OCI-LY7 (cell line): ENCODE measurements at regions of chr14 and their contacts with region 1.

Region 1: DNA sequence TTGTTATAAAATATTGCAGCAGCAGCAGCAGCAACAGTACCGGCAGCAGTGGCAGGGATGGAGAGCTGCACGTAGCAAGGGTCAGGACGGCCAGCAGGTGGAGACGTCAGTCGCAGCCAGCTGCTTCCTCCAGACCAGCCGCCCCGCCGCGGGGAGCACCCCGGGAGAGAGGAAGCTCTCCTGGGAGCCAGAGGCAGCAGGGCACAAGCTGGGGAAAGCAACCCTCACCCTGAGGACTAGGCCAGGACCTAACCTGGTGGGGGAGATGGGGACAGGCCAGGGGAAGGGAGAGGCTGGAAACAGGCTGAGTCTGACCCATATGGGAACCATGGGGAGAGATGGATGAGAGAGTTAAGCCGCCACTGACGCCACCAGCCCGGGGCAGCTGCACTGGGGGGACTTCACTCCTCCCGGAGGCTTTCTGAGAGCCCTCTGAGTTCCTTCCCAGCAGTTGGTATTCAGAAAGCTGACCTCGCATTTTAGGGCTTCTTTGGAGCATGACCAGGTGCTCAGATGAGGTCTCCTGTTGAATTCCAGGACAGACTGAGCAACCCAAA is 56.3 kb downstream of the SPTB start:
- DNase-seq: peak; percentile 60
- H3K4me3 ChIP-seq: no peak overlapping the region
- H3K27ac ChIP-seq: no peak overlapping the region
- H3K4me1 ChIP-seq: no peaks in the 10 kb centered on the region
- CTCF ChIP-seq: peak; percentile 77

Region 2: DNA sequence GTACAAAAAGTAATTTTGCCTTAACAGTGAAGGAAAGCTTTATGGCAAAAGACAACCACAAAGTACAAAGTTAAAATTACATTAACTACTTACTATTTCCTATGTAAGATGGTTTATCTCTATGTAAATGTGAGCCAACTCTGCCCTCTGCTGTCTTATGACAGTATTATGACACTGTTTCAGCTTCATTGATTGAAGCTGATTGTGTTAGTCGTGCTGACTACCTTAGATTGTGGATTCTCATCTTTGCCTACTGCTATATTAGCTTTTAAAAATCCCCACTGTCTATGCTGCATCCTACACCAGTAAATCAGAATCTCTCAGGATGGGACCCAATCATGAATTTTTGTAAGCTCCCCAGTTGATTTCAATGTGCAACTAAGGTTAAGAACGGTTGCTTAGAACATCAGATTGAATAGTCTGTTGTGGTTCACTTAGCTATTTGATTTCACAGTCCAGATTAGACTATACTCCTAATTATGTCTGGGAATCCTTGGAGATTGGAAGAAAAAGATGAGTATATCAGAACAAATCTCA is 68.5 kb after region 1 on chr14:
- CTCF ChIA-PET with region 1: interaction called, 10 read pairs
- POLR2A ChIA-PET with region 1: no interaction called
- intact Hi-C with region 1: loop called (anchors 5 kb)
- DNase-seq: peak; percentile 60
- H3K4me3 ChIP-seq: no peak overlapping the region
- H3K27ac ChIP-seq: no peak overlapping the region
- H3K4me1 ChIP-seq: no peaks in the 10 kb centered on the region
- CTCF ChIP-seq: peak; percentile 80